HepG2 (cell line): ENCODE measurements at regions of chr15 and their contacts with region 1.

Region 1: DNA sequence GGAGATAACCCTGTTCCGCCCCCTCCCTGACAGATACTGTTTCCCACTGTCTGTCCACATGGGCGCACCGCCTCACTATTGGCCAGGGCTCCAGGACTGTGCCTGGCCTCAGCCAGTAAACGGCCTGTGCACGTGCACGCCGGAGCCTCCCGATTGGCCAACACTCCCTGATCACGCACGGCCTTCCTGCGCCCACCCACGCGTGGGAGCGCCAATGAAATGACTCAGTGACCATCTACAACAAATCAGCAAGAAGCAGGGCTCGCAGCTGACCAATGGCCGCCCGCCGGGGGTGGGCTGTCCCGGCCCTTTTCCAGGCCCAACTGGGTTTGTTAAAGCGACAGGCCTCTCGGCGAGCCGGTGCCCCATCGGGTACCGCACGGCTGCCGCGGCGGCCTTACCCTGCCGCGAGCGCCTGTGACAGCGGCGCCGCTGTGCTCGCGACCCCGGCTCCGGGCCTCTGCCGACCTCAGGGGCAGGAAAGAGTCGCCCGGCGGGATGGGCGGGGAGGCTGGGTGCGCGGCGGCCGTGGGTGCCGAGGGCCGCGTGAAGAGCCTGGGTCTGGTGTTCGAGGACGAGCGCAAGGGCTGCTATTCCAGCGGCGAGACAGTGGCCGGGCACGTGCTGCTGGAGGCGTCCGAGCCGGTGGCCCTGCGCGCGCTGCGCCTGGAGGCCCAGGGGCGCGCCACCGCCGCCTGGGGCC is at the start of gene ARRDC4:
- DNase-seq: peak; percentile 98
- ATAC-seq: peak; percentile 99
- H3K4me3 ChIP-seq: peak within 1 kb of the TSS; percentile 48 to 75 (median 65)
- H3K27ac ChIP-seq: peak within 1 kb of the TSS; percentile 59
- H3K4me1 ChIP-seq: peaks cover 30% of the 10 kb centered on the region
- H3K27me3 ChIP-seq: no peaks in the 10 kb centered on the region
- CTCF ChIP-seq: no peak
- EP300 ChIP-seq: peak in 1 of 2 experiments; percentile 49; a peak in 2 of 4 replicates
- POLR2A ChIP-seq: no peak
- RAD21 ChIP-seq: no peak
- total RNA-seq, gene ARRDC4: 1.5 and 2.5 TPM in 2 replicates

Region 2: GRCh38 chr15:97747342-97747741 is 213.2 kb before region 1 on chr15:
- CTCF ChIA-PET with region 1: no interaction called
- POLR2A ChIA-PET with region 1: no interaction called
- in situ Hi-C with region 1: no loop called
- intact Hi-C with region 1: no loop called
- DNase-seq: no peak
- ATAC-seq: no peak
- H3K4me3 ChIP-seq: no peak overlapping the region
- H3K27ac ChIP-seq: no peak overlapping the region
- H3K4me1 ChIP-seq: no peaks in the 10 kb centered on the region
- H3K27me3 ChIP-seq: peaks cover 0 to 4% of the 10 kb centered on the region in 2 experiments; a peak in 1 of 5 replicates
- CTCF ChIP-seq: no peak
- EP300 ChIP-seq: no peak
- POLR2A ChIP-seq: no peak
- RAD21 ChIP-seq: no peak

Region 3: DNA sequence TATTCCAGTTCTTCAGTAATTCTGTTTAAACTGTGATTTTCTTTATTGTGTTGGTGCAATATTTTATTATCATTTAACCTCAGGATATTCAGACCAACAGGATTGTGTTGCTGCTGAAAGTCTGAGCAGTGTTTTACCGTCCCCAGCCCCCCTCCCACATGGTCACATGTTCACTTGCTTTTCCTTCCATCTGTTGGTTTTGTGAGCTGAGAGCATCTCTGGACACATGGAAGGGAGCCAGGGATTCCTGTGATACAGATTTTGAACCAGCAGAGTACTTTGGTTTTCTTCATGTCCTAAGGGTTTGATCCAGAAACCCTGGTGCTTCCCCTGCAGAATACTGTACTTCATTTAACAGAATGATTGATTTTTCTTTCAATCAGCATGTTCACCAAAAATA is 11.9 kb after region 1 on chr15:
- CTCF ChIA-PET with region 1: no interaction called
- POLR2A ChIA-PET with region 1: no interaction called
- in situ Hi-C with region 1: no loop called
- intact Hi-C with region 1: no loop called
- DNase-seq: no peak
- ATAC-seq: no peak
- H3K4me3 ChIP-seq: no peak overlapping the region
- H3K27ac ChIP-seq: no peak overlapping the region
- H3K4me1 ChIP-seq: no peaks in the 10 kb centered on the region
- H3K27me3 ChIP-seq: no peaks in the 10 kb centered on the region
- CTCF ChIP-seq: no peak
- EP300 ChIP-seq: no peak
- POLR2A ChIP-seq: no peak
- RAD21 ChIP-seq: no peak

Region 4: GRCh38 chr15:98003991-98004390 is 43.5 kb after region 1 on chr15:
- CTCF ChIA-PET with region 1: no interaction called
- POLR2A ChIA-PET with region 1: no interaction called
- in situ Hi-C with region 1: no loop called
- intact Hi-C with region 1: loop called (anchors 2 kb)
- DNase-seq: no peak
- ATAC-seq: no peak
- H3K4me3 ChIP-seq: no peak overlapping the region
- H3K27ac ChIP-seq: no peak overlapping the region
- H3K4me1 ChIP-seq: peaks cover 24% of the 10 kb centered on the region
- H3K27me3 ChIP-seq: no peaks in the 10 kb centered on the region; a peak in 2 of 5 replicates
- CTCF ChIP-seq: no peak
- EP300 ChIP-seq: no peak
- POLR2A ChIP-seq: no peak
- RAD21 ChIP-seq: no peak

Region 5: DNA sequence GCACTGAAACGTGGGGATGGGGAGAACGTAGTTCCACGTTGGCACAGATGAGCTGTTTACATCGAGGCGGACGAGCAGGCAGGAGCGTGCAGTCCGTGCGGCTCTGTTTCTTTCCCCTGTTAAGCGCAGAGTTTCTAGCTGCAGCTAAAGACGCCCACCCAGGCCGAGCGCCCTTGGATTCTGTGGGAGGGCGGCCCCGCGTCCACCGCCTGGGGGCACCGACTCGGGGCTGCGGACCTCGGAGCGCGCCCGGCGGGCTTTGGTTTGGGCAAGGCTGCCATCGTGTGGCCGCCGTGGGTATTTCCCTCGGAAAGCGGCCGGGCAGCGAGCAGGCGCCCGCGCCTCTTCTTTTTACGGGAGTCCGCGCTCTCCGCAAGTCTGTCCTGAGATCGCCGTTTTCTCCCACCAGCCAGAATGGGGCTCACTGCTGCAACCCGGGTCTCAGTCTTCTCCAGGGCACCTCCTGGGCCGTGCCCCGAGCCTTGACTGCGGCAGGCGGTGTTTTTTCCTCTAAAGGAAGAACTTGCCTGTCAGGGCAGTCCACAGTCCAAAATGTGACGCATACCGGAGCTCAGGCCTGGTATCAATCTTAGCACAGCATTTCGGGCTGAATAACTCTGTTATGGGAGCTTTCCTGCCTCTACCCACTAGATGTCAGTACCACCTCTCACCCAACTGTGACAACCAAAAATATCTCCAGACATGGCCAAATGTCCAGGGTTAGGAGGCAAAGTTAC is 467.9 kb after region 1 on chr15:
- CTCF ChIA-PET with region 1: no interaction called
- POLR2A ChIA-PET with region 1: no interaction called
- in situ Hi-C with region 1: no loop called
- intact Hi-C with region 1: loop called (anchors 2 kb)
- DNase-seq: peak; percentile 57
- ATAC-seq: peak; percentile 92
- H3K4me3 ChIP-seq: peak overlapping the region; percentile 39 to 65 (median 44); a peak in 5 of 6 replicates
- H3K27ac ChIP-seq: no peak overlapping the region
- H3K4me1 ChIP-seq: 0 out of 2 replicates have a peak, but pooled peaks cover 5% of the 10 kb centered on the region
- H3K27me3 ChIP-seq: peaks cover 0 to 37% of the 10 kb centered on the region in 2 experiments; a peak in 2 of 5 replicates
- CTCF ChIP-seq: peak; percentile 85
- EP300 ChIP-seq: no peak
- POLR2A ChIP-seq: no peak
- RAD21 ChIP-seq: peak; percentile 79